ENCODE measurements at regions of chr9 and their contacts with region 1.

Region 1: GRCh38 chr9:69549310-69550202 is 122.6 kb downstream of the APBA1 start:
- DNase-seq: peak; percentile 32
- H3K4me3 Mint-ChIP-seq: no peak overlapping the region
- H3K27ac Mint-ChIP-seq: no peak overlapping the region
- H3K4me1 Mint-ChIP-seq: no peaks in the 10 kb centered on the region
- H3K27me3 Mint-ChIP-seq: peaks cover 18% of the 10 kb centered on the region

Region 2: DNA sequence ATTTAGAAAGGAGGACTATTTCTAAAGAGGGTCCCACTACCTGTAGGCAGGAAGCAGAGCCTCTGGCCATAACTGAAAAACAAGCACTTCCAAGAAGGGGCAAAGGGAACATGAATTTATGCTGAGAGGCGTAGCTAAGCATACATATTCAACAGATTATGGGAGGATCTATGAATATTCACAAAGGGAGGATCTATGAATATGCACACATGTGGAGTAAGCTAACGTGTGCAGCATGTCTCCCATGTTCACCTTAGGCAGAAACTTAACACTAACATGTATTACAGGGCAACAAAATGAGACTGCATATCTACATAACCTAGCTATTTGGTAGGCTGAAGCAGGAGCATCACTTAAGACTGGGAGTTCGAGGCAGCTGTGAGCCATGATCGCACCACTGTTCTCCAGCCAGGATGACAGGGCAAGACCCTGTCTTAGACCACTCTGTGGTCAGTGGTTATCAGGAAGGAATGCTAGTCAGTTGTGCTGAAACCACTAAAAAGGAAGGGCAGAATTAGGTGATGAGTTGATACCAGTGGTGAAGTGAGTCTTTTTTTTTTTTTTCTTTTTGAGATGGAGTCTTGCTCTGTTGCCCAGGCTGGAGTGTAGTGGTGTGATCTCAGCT is 493.3 kb before region 1 on chr9:
- CTCF ChIA-PET with region 1: no interaction called
- intact Hi-C with region 1: loop called (anchors 5 kb)
- DNase-seq: no peak
- H3K4me3 Mint-ChIP-seq: no peak overlapping the region
- H3K27ac Mint-ChIP-seq: no peak overlapping the region
- H3K4me1 Mint-ChIP-seq: no peaks in the 10 kb centered on the region
- H3K27me3 Mint-ChIP-seq: no peaks in the 10 kb centered on the region

Region 3: GRCh38 chr9:69582544-69583297 is 33.2 kb after region 1 on chr9:
- CTCF ChIA-PET with region 1: no interaction called
- intact Hi-C with region 1: no loop called
- DNase-seq: no peak
- H3K4me3 Mint-ChIP-seq: no peak overlapping the region
- H3K27ac Mint-ChIP-seq: no peak overlapping the region
- H3K4me1 Mint-ChIP-seq: no peaks in the 10 kb centered on the region
- H3K27me3 Mint-ChIP-seq: peaks cover 9% of the 10 kb centered on the region

Region 4: GRCh38 chr9:69611221-69611620 is 61.7 kb after region 1 on chr9:
- CTCF ChIA-PET with region 1: no interaction called
- intact Hi-C with region 1: no loop called
- DNase-seq: no peak
- H3K4me3 Mint-ChIP-seq: no peak overlapping the region
- H3K27ac Mint-ChIP-seq: no peak overlapping the region
- H3K4me1 Mint-ChIP-seq: no peaks in the 10 kb centered on the region
- H3K27me3 Mint-ChIP-seq: peaks cover 2% of the 10 kb centered on the region